CD4-positive, alpha-beta memory T cell (primary cell): ENCODE measurements at regions of chr7 and their contacts with region 1.

Region 1: GRCh38 chr7:142811154-142811737 is 40.5 kb downstream of the PRSS2 start:
- DNase-seq: peak; percentile 64 to 82 (median 79)
- H3K4me3 ChIP-seq: no peak overlapping the region
- H3K4me3 Mint-ChIP-seq: peak overlapping the region in 7 of 8 donors; percentile 57 to 79 (median 71)
- H3K27ac ChIP-seq: peak overlapping the region; percentile 99
- H3K27ac Mint-ChIP-seq: peak overlapping the region; percentile 92 to 100 (median 100)
- H3K4me1 ChIP-seq: peaks cover 79% of the 10 kb centered on the region
- H3K4me1 Mint-ChIP-seq: peaks cover 48 to 76% (median 73%) of the 10 kb centered on the region in 4 donors
- H3K27me3 ChIP-seq: no peaks in the 10 kb centered on the region
- H3K27me3 Mint-ChIP-seq: no peaks in the 10 kb centered on the region

Region 2: GRCh38 chr7:142313528-142313927 is 497.7 kb before region 1 on chr7:
- CTCF ChIA-PET with region 1: interaction called, 4 read pairs
- POLR2A ChIA-PET with region 1: interaction called, 116 read pairs
- intact Hi-C with region 1: no loop called
- DNase-seq: peak in 4 of 5 donors; percentile 30 to 61 (median 38)
- H3K4me3 ChIP-seq: no peak overlapping the region
- H3K4me3 Mint-ChIP-seq: peak overlapping the region; percentile 17 to 67 (median 58)
- H3K27ac ChIP-seq: no peak overlapping the region
- H3K27ac Mint-ChIP-seq: peak overlapping the region in 6 of 7 donors; percentile 46 to 88 (median 67)
- H3K4me1 ChIP-seq: peaks cover 12% of the 10 kb centered on the region
- H3K4me1 Mint-ChIP-seq: peaks cover 6 to 27% (median 9%) of the 10 kb centered on the region in 4 donors
- H3K27me3 ChIP-seq: no peaks in the 10 kb centered on the region
- H3K27me3 Mint-ChIP-seq: peaks cover 9 to 14% of the 10 kb centered on the region in 2 donors

Region 3: DNA sequence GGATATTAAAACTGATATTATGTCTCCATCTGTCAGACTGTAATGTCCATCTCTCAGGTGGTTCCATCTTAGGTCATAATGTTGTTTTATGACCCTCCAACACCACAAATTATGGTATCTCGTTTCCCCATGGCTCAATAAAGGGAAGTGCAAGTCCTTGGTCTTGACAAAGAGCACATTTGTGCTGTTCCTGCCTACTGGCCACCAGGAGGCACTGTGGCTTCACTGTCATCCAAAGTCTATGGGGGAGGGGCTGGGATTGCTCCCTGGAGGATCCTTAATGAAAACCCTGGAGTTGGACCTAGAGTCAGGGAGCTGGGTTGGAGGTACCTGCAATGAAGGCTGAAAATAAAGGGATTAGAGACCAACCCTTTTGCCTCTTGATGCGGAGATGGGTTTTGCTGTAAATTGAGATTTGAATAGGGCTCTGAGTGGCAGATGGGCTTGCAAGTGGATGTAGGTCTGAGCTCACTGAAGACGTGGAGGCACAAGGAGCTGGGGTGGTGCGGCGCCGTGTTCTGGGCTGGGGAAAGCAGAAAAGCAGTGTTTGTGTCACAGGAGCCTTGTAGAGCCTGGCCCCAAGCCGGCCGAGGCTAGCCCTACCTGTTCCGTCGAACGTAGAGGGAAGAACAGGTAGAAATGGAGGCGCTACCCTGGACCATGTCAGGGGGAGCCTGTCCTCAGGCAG is 372.9 kb before region 1 on chr7:
- CTCF ChIA-PET with region 1: interaction called, 5 read pairs
- POLR2A ChIA-PET with region 1: interaction called, 20 read pairs
- intact Hi-C with region 1: no loop called
- DNase-seq: peak in 4 of 5 donors; percentile 15 to 33 (median 26)
- H3K4me3 ChIP-seq: no peak overlapping the region
- H3K4me3 Mint-ChIP-seq: peak overlapping the region in 4 of 8 donors; percentile 0 to 58 (median 40)
- H3K27ac ChIP-seq: no peak overlapping the region
- H3K27ac Mint-ChIP-seq: peak overlapping the region in 2 of 7 donors; percentile 13 to 49
- H3K4me1 ChIP-seq: peaks cover 47% of the 10 kb centered on the region
- H3K4me1 Mint-ChIP-seq: peaks cover 38 to 71% (median 55%) of the 10 kb centered on the region in 4 donors
- H3K27me3 ChIP-seq: no peaks in the 10 kb centered on the region
- H3K27me3 Mint-ChIP-seq: no peaks in the 10 kb centered on the region

Region 4: GRCh38 chr7:142496545-142497041 is 314.7 kb before region 1 on chr7:
- CTCF ChIA-PET with region 1: interaction called, 11 read pairs
- POLR2A ChIA-PET with region 1: interaction called, 62 read pairs
- intact Hi-C with region 1: loop called (anchors 1 kb)
- DNase-seq: peak; percentile 33 to 46 (median 36)
- H3K4me3 ChIP-seq: no peak overlapping the region
- H3K4me3 Mint-ChIP-seq: peak overlapping the region; percentile 40 to 75 (median 66)
- H3K27ac ChIP-seq: no peak overlapping the region
- H3K27ac Mint-ChIP-seq: peak overlapping the region; percentile 39 to 86 (median 74)
- H3K4me1 ChIP-seq: peaks cover 30% of the 10 kb centered on the region
- H3K4me1 Mint-ChIP-seq: peaks cover 24 to 51% (median 30%) of the 10 kb centered on the region in 4 donors
- H3K27me3 ChIP-seq: no peaks in the 10 kb centered on the region
- H3K27me3 Mint-ChIP-seq: no peaks in the 10 kb centered on the region

Region 5: GRCh38 chr7:142612237-142612881 is 198.9 kb before region 1 on chr7:
- CTCF ChIA-PET with region 1: interaction called, 9 read pairs
- POLR2A ChIA-PET with region 1: interaction called, 63 read pairs
- intact Hi-C with region 1: no loop called
- DNase-seq: no peak
- H3K4me3 ChIP-seq: no peak overlapping the region
- H3K4me3 Mint-ChIP-seq: no peak overlapping the region
- H3K27ac ChIP-seq: no peak overlapping the region
- H3K27ac Mint-ChIP-seq: peak overlapping the region in 5 of 7 donors; percentile 8 to 83 (median 48)
- H3K4me1 ChIP-seq: peaks cover 13% of the 10 kb centered on the region
- H3K4me1 Mint-ChIP-seq: peaks cover 7 to 24% (median 15%) of the 10 kb centered on the region in 4 donors
- H3K27me3 ChIP-seq: no peaks in the 10 kb centered on the region
- H3K27me3 Mint-ChIP-seq: no peaks in the 10 kb centered on the region

Region 6: DNA sequence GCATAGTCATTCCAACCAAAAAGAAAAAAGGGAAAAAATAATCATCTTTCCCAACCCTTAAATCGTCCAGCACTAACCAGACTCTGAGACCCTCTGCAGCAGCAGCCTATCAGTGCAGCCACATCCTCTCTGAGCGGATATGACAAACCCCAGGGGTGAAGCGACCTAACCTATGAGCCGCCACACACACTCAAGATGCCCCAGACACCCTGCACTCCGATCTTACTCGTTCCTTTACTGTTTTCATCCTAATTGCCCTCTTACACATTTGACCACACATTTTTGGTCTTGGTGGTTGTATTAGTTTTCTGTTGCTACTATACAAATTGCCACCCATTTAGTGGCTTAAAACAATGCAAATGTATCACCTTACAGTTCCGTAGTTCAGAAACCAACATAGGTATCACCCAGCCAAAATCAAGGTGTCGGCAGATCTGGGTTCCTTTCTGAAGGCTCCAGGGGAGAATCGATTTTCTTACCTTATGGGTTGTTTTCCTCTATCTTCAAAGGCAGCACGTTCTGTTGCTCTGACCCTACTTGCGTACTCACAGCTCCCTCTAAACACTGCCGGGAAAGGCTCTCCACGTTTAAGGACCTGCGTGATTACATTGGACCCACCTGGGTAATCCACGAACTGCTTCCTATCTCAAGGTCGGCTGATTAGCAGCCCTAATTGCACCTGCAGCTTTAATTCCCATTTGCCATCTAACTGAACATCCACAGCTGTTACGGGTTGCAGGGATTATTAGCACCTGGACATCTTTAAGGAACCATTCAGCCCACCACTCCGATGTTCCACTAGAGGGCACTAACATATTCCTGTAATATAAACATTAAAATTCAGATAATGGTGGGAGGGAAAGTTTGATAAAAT is 99.3 kb before region 1 on chr7:
- CTCF ChIA-PET with region 1: interaction called, 73 read pairs
- POLR2A ChIA-PET with region 1: interaction called, 115 read pairs
- intact Hi-C with region 1: loop called (anchors 1 kb)
- DNase-seq: peak in 3 of 5 donors; percentile 19 to 45 (median 26)
- H3K4me3 ChIP-seq: peak overlapping the region in 1 of 2 donors; percentile 53
- H3K4me3 Mint-ChIP-seq: peak overlapping the region; percentile 87 to 94 (median 89)
- H3K27ac ChIP-seq: peak overlapping the region; percentile 35
- H3K27ac Mint-ChIP-seq: peak overlapping the region; percentile 85 to 95 (median 93)
- H3K4me1 ChIP-seq: peaks cover 78% of the 10 kb centered on the region
- H3K4me1 Mint-ChIP-seq: peaks cover 32 to 80% (median 62%) of the 10 kb centered on the region in 4 donors
- H3K27me3 ChIP-seq: no peaks in the 10 kb centered on the region
- H3K27me3 Mint-ChIP-seq: no peaks in the 10 kb centered on the region

Region 7: GRCh38 chr7:143008007-143008901 is 197.0 kb after region 1 on chr7:
- CTCF ChIA-PET with region 1: interaction called, 34 read pairs
- POLR2A ChIA-PET with region 1: interaction called, 13 read pairs
- intact Hi-C with region 1: loop called (anchors 1 kb)
- DNase-seq: peak; percentile 69 to 80 (median 76)
- H3K4me3 ChIP-seq: no peak overlapping the region
- H3K4me3 Mint-ChIP-seq: peak overlapping the region in 1 of 8 donors; percentile 15
- H3K27ac ChIP-seq: no peak overlapping the region
- H3K27ac Mint-ChIP-seq: peak overlapping the region in 2 of 7 donors; percentile 5 to 65
- H3K4me1 ChIP-seq: peaks cover 3% of the 10 kb centered on the region
- H3K4me1 Mint-ChIP-seq: peaks cover 4 to 6% (median 6%) of the 10 kb centered on the region in 4 donors
- H3K27me3 ChIP-seq: no peaks in the 10 kb centered on the region
- H3K27me3 Mint-ChIP-seq: peaks cover 6 to 7% of the 10 kb centered on the region in 2 donors